ENCODE measurements at regions of chr1 and their contacts with region 1.

Region 1: GRCh38 chr1:117059678-117060440 is at the start of gene TTF2:
- DNase-seq: peak; percentile 96
- H3K4me3 ChIP-seq: peak within 1 kb of the TSS; percentile 54 to 58
- H3K27ac ChIP-seq: peak within 1 kb of the TSS; percentile 51 to 71
- H3K4me1 ChIP-seq: no peaks in the 10 kb centered on the region
- H3K27me3 ChIP-seq: no peaks in the 10 kb centered on the region
- CTCF ChIP-seq: peak in 3 of 4 experiments; percentile 46 to 67 (median 55)
- POLR2A ChIP-seq: peak; percentile 41
- total RNA-seq, gene TTF2: 11.2 to 11.6 TPM

Region 2: GRCh38 chr1:116033322-116033721 is 1026.5 kb before region 1 on chr1:
- intact Hi-C with region 1: no loop called
- DNase-seq: peak; percentile 38
- H3K4me3 ChIP-seq: no peak overlapping the region
- H3K27ac ChIP-seq: no peak overlapping the region
- H3K4me1 ChIP-seq: no peaks in the 10 kb centered on the region
- H3K27me3 ChIP-seq: no peaks in the 10 kb centered on the region
- CTCF ChIP-seq: no peak
- POLR2A ChIP-seq: no peak

Region 3: GRCh38 chr1:116737020-116737854 is 322.6 kb before region 1 on chr1:
- intact Hi-C with region 1: loop called (anchors 5 kb)
- DNase-seq: peak; percentile 33
- H3K4me3 ChIP-seq: no peak overlapping the region
- H3K27ac ChIP-seq: no peak overlapping the region
- H3K4me1 ChIP-seq: no peaks in the 10 kb centered on the region
- H3K27me3 ChIP-seq: no peaks in the 10 kb centered on the region
- CTCF ChIP-seq: peak in 3 of 4 experiments; percentile 64 to 78 (median 73)
- POLR2A ChIP-seq: no peak

Region 4: DNA sequence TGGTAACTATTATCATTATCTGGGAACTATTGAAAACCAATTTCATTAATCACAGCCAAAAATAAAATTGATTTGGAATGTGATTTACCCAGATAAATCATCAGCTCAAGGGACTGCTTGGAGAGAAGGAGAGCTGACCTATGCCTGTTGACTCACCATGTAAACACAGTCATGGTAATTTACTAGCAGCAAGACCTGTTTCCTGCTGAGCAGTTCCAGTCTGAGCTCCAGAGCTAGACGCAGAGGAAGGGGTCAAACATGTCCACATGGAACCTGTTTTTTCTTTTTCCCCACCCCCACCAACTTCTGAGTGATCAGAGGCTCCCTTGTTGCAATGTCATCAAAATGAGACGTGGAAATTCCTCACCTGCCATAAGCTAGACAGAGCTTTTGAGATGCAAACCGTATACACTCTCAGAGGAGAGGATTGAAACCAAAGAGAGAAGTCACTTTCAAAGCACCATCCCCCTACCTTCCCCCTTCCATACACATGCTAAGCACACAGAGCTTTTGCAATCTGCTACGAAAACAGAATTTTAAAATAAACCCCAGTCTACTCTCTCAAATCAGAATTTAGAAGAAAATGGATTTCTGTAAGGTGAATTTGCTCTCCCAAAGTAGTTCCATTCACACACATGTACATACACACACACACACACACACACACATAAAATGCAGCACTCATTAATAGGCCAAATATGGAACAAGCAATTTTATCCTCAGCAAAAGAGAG is 206.0 kb before region 1 on chr1:
- intact Hi-C with region 1: loop called (anchors 5 kb)
- DNase-seq: peak; percentile 49
- H3K4me3 ChIP-seq: no peak overlapping the region
- H3K27ac ChIP-seq: no peak overlapping the region
- H3K4me1 ChIP-seq: no peaks in the 10 kb centered on the region
- H3K27me3 ChIP-seq: no peaks in the 10 kb centered on the region
- CTCF ChIP-seq: no peak
- POLR2A ChIP-seq: no peak

Region 5: DNA sequence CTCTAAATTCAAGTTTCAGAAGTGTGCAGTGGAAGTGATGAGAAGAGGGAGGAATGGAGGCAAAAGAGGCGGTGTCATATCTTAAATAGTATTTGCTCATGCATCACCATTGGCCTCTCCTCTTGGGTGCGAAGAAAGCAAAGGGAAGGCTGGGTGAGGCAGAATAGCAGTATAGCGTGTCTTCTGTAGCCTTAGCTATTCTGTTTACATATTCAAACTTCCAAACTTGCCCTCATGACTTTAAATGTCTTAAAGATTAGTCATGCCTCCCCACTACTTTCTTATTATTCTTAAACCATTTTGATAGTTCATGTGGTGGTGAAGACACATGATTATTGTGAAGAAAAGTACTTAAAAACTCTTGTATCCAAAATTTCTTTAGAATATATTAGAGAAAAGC is 441.4 kb after region 1 on chr1:
- intact Hi-C with region 1: loop called (anchors 10 kb)
- DNase-seq: no peak
- H3K4me3 ChIP-seq: no peak overlapping the region
- H3K27ac ChIP-seq: no peak overlapping the region
- H3K4me1 ChIP-seq: no peaks in the 10 kb centered on the region
- H3K27me3 ChIP-seq: no peaks in the 10 kb centered on the region
- CTCF ChIP-seq: no peak
- POLR2A ChIP-seq: no peak

Measured in prostate gland (tissue), 2 donors.